Calu3 (cell line): ENCODE measurements at regions of chr7 and their contacts with region 1.

Region 1: DNA sequence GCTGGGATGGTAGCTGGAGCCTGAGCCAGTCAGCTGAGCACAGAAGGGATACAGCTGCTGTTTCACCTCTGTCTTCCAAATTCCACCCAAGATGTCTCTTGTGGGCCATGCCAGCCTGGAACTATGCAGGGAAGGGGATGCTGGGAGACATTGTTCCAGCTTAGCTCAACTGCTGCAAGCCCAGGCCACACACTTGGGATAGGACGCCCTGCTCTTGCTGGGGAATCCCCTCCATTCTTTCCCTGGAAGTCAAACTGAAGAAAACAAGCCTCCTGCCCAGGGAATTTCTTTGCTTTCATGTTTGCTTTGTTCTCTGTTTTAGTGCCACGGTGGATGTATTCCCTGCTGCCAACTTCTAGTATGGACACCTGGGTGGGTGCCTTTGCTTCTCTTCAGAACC is 55.2 kb upstream of the CDK13 start:
- DNase-seq: no peak
- H3K4me3 Mint-ChIP-seq: no peak overlapping the region
- H3K27ac Mint-ChIP-seq: no peak overlapping the region
- H3K4me1 Mint-ChIP-seq: peaks cover 50% of the 10 kb centered on the region
- H3K27me3 Mint-ChIP-seq: peaks cover 7% of the 10 kb centered on the region
- CTCF ChIP-seq: no peak

Region 2: GRCh38 chr7:39910108-39910869 is 15.4 kb after region 1 on chr7:
- CTCF ChIA-PET with region 1: interaction called, 11 read pairs
- intact Hi-C with region 1: no loop called
- DNase-seq: peak; percentile 47
- H3K4me3 Mint-ChIP-seq: no peak overlapping the region
- H3K27ac Mint-ChIP-seq: no peak overlapping the region
- H3K4me1 Mint-ChIP-seq: peaks cover 6% of the 10 kb centered on the region
- H3K27me3 Mint-ChIP-seq: no peaks in the 10 kb centered on the region
- CTCF ChIP-seq: no peak

Region 3: GRCh38 chr7:39921506-39922175 is 26.7 kb after region 1 on chr7:
- CTCF ChIA-PET with region 1: interaction called, 11 read pairs
- intact Hi-C with region 1: no loop called
- DNase-seq: no peak
- H3K4me3 Mint-ChIP-seq: no peak overlapping the region
- H3K27ac Mint-ChIP-seq: no peak overlapping the region
- H3K4me1 Mint-ChIP-seq: no peaks in the 10 kb centered on the region
- H3K27me3 Mint-ChIP-seq: no peaks in the 10 kb centered on the region
- CTCF ChIP-seq: no peak

Region 4: DNA sequence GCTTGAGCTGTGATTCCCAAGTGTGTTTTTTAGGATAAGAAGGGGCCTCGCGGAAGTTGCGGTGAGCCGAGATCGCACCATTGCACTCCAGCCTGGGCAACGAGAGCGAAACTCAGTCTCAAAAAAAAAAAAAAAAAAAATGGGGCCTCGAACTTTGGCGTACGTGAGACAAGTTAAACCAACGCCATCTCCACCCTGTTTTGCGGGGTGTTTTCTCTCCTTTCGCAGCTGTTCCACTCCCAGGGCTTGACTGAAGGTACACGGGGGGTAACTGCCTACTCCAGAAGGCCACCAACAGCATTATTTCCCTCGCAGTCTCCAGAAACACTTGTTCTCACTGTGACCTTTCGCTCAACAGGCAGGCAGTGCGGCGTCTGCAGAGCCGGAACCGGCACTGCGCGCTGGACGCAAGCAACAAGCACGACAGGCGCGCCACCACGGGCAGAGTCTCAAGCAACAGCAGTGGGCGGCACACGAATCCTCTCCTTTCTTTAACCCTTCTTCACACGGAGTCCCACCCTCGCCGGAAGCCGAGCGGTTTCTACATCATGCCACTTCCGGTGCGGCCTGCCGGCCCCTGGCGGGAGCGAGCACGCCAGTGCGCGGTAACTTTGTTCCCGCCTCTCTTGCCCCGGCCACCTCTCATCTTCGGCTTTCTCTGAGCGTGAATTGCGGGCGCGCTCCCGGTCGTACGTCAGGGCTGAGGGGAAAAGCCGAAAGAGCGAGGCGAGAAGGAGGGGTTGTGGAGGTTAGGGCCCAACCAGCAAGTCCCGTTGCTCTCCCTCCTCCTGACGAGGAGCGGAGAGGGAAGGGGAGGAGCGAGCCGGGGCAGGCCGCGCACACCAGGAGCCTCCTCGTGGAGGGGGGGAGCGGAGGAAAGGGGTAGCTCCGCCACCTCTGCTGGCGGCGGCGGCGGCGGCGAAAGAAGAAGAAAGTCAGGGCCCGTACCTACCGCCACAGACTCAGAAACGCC is 54.3 kb after region 1 on chr7:
- CTCF ChIA-PET with region 1: interaction called, 16 read pairs
- intact Hi-C with region 1: loop called (anchors 2 kb)
- DNase-seq: peak; percentile 99
- H3K4me3 Mint-ChIP-seq: peak overlapping the region; percentile 87
- H3K27ac Mint-ChIP-seq: peak overlapping the region; percentile 84
- H3K4me1 Mint-ChIP-seq: peaks cover 11% of the 10 kb centered on the region
- H3K27me3 Mint-ChIP-seq: no peaks in the 10 kb centered on the region
- CTCF ChIP-seq: peak; percentile 21

Region 5: DNA sequence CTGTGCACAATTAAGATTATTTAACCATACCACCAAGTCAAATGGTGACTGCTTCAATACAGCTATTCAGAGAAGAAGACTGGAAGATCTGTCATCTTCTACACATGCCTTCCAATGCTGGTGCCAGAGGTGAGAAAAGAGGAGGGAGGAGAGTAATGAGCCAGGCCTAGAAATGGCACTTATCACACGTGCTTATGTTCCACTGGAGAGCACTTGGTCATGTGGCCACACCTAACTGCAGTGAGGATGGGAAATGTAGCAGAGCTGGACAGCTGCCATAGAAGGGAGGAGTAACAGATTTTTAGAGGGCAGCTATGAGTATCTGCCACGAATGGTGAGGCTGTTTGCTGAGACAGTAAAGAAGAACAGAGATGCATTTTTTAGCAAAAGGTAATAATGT is 162.4 kb after region 1 on chr7:
- CTCF ChIA-PET with region 1: interaction called, 50 read pairs
- intact Hi-C with region 1: loop called (anchors 1 kb)
- DNase-seq: no peak
- H3K4me3 Mint-ChIP-seq: no peak overlapping the region
- H3K27ac Mint-ChIP-seq: no peak overlapping the region
- H3K4me1 Mint-ChIP-seq: peaks cover 12% of the 10 kb centered on the region
- H3K27me3 Mint-ChIP-seq: no peaks in the 10 kb centered on the region
- CTCF ChIP-seq: no peak

Region 6: GRCh38 chr7:40134428-40135316 is 239.8 kb after region 1 on chr7 and contains the starts of genes MPLKIP and SUGCT:
- CTCF ChIA-PET with region 1: interaction called, 3 read pairs
- intact Hi-C with region 1: loop called (anchors 10 kb)
- DNase-seq: peak; percentile 90
- H3K4me3 Mint-ChIP-seq: peak within 1 kb of the TSS; percentile 96
- H3K27ac Mint-ChIP-seq: peak within 1 kb of the TSS; percentile 95
- H3K4me1 Mint-ChIP-seq: peaks cover 24% of the 10 kb centered on the region
- H3K27me3 Mint-ChIP-seq: no peaks in the 10 kb centered on the region
- CTCF ChIP-seq: peak; percentile 98
- total RNA-seq, gene MPLKIP: 59.1 and 62.7 TPM in 2 replicates
- total RNA-seq, gene SUGCT: 1.6 and 3.5 TPM in 2 replicates

Region 7: GRCh38 chr7:40162516-40162915 is 267.6 kb after region 1 on chr7:
- CTCF ChIA-PET with region 1: no interaction called
- intact Hi-C with region 1: no loop called
- DNase-seq: no peak
- H3K4me3 Mint-ChIP-seq: no peak overlapping the region
- H3K27ac Mint-ChIP-seq: no peak overlapping the region
- H3K4me1 Mint-ChIP-seq: no peaks in the 10 kb centered on the region
- H3K27me3 Mint-ChIP-seq: peaks cover 2% of the 10 kb centered on the region
- CTCF ChIP-seq: no peak